Naive thymus-derived CD4-positive, alpha-beta T cell (primary cell): ENCODE measurements at regions of chr19 and their contacts with region 1.

Region 1: GRCh38 chr19:17075035-17075863 is at the starts of genes HAUS8 and MYO9B:
- DNase-seq: peak; percentile 96 to 100 (median 100)
- ATAC-seq: peak; percentile 98
- H3K4me3 ChIP-seq: peak within 1 kb of the TSS; percentile 94
- H3K4me3 Mint-ChIP-seq: peak within 1 kb of the TSS; percentile 96 to 100 (median 98)
- H3K27ac ChIP-seq: peak within 1 kb of the TSS; percentile 88
- H3K27ac Mint-ChIP-seq: peak within 1 kb of the TSS; percentile 86 to 99 (median 97)
- H3K4me1 ChIP-seq: peaks cover 28 to 32% of the 10 kb centered on the region in 2 donors
- H3K4me1 Mint-ChIP-seq: peaks cover 45 to 65% (median 55%) of the 10 kb centered on the region in 7 donors
- H3K27me3 ChIP-seq: no peaks in the 10 kb centered on the region
- H3K27me3 Mint-ChIP-seq: no peaks in the 10 kb centered on the region
- total RNA-seq, gene HAUS8: 16.7 to 31.5 (median 19.3) TPM
- total RNA-seq, gene MYO9B: 154 to 297 (median 205) TPM

Region 2: DNA sequence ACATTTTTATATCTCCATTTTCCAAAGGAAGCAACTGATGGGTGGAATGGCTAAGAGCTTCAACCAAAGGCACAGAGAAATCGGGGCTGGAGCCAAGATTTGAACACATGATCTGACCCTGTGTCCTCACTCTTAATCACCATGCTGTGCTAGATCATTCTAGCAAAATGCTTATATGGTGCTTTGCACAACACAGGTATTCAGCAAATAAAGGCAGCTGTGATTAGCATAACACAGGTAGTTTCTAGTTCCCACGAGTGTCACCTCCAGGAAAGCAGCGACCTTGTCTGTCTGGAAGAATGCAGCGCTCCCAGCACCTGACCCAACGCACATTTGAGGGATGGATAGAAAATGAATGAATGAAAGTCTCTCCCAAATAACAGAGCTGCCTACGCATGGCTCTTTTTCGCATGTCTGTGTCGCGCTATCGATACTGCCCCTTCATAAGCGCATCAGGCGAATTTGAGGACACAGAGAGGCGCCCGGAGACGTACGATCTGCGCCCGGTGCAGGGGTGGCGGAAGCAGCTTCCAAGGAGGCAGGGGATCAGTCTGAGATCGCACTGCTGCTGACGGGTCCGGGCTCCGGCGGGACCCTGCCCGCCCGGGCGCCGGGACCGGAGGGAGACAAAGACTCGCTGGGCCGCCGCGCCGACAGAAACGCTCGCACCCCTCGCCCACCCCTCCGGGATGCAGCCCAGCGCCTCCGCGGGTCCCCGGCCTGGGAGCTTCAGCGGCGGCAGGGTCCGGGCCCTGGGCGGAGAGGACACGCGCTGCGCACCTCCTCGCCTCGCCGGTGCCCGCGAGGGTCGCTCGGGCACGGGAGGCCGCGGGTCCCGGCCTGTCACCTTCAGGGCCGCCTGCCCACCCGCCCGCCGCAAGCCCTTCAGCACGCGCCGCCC is 604.1 kb before region 1 on chr19:
- CTCF ChIA-PET with region 1: no interaction called
- POLR2A ChIA-PET with region 1: no interaction called
- intact Hi-C with region 1: loop called in 1 of 2 experiments (anchors 2 kb)
- DNase-seq: peak in 5 of 9 donors; percentile 14 to 40 (median 18)
- ATAC-seq: peak; percentile 2
- H3K4me3 ChIP-seq: peak overlapping the region; percentile 96
- H3K4me3 Mint-ChIP-seq: peak overlapping the region; percentile 84 to 93 (median 88)
- H3K27ac ChIP-seq: peak overlapping the region; percentile 96
- H3K27ac Mint-ChIP-seq: peak overlapping the region; percentile 18 to 87 (median 79)
- H3K4me1 ChIP-seq: peaks cover 5 to 15% of the 10 kb centered on the region in 2 donors
- H3K4me1 Mint-ChIP-seq: peaks cover 30 to 47% (median 41%) of the 10 kb centered on the region in 7 donors
- H3K27me3 ChIP-seq: no peaks in the 10 kb centered on the region
- H3K27me3 Mint-ChIP-seq: peaks cover 0 to 2% (median 0%) of the 10 kb centered on the region in 5 donors

Region 3: GRCh38 chr19:17037184-17037583 is 38.1 kb before region 1 on chr19:
- CTCF ChIA-PET with region 1: no interaction called
- POLR2A ChIA-PET with region 1: no interaction called
- intact Hi-C with region 1: no loop called
- DNase-seq: no peak
- ATAC-seq: no peak
- H3K4me3 ChIP-seq: no peak overlapping the region
- H3K4me3 Mint-ChIP-seq: no peak overlapping the region
- H3K27ac ChIP-seq: no peak overlapping the region
- H3K27ac Mint-ChIP-seq: no peak overlapping the region
- H3K4me1 ChIP-seq: no peaks in the 10 kb centered on the region
- H3K4me1 Mint-ChIP-seq: peaks cover 0 to 2% (median 0%) of the 10 kb centered on the region in 7 donors
- H3K27me3 ChIP-seq: no peaks in the 10 kb centered on the region
- H3K27me3 Mint-ChIP-seq: peaks cover 0 to 23% (median 10%) of the 10 kb centered on the region in 5 donors

Region 4: DNA sequence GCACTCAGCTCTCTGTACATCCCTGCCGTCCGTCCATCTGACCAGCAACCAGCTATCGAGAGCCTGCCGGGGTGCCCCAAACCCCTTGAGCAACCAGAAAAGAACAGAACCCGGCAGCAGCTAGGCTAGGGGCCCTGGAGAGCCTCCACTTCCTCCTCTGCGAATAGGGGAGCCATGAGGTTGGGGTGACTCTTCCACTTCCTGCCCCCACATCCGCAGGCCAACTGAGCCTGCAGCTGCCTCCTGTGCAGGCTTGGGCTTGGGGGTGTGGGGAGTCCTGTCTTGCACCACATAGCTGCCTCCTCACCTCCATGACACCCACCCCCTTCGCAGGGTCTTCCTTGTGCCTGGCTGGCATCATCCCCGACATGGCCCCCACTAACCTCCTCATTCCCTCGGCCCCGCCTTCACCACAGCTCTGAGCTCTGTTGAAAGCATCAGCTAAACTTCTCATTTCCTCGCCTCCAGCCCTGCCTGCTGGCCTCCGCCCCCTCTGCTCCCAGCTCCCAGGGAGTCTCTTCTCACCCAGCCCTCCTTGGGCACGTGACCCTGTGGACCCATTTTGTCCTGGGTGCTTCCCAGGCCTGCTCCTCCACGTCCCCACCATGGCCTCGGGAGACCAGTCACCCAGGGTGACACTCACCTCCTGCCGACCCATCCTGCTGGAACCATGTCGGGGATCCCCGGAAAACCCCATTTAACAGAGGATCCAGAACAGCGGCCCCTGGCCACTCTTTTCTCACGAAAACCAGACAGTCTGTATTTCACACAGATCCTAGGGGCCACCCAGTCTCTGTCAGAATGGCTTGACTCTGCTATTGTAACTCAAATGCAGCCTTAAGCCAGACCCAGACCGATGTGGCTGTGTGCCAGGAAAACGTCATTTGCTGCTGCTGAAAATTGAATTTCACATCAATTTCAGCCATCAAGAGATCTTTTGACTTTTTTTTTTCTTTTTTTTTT is 50.7 kb after region 1 on chr19:
- CTCF ChIA-PET with region 1: no interaction called
- POLR2A ChIA-PET with region 1: interaction called, 56 read pairs
- intact Hi-C with region 1: loop called (anchors 1 kb)
- DNase-seq: peak; percentile 58 to 87 (median 83)
- ATAC-seq: peak; percentile 91
- H3K4me3 ChIP-seq: peak overlapping the region; percentile 71
- H3K4me3 Mint-ChIP-seq: peak overlapping the region; percentile 81 to 95 (median 86)
- H3K27ac ChIP-seq: peak overlapping the region; percentile 95
- H3K27ac Mint-ChIP-seq: peak overlapping the region; percentile 90 to 100 (median 99)
- H3K4me1 ChIP-seq: peaks cover 33 to 41% of the 10 kb centered on the region in 2 donors
- H3K4me1 Mint-ChIP-seq: peaks cover 18 to 71% (median 50%) of the 10 kb centered on the region in 7 donors
- H3K27me3 ChIP-seq: no peaks in the 10 kb centered on the region
- H3K27me3 Mint-ChIP-seq: no peaks in the 10 kb centered on the region

Region 5: GRCh38 chr19:17226002-17226933 is 151.0 kb after region 1 on chr19 and contains the start of gene OCEL1:
- CTCF ChIA-PET with region 1: no interaction called
- POLR2A ChIA-PET with region 1: no interaction called
- intact Hi-C with region 1: loop called (anchors 1 kb)
- DNase-seq: peak; percentile 91 to 98 (median 97)
- ATAC-seq: peak; percentile 94
- H3K4me3 ChIP-seq: peak within 1 kb of the TSS; percentile 98
- H3K4me3 Mint-ChIP-seq: peak within 1 kb of the TSS; percentile 82 to 98 (median 94)
- H3K27ac ChIP-seq: peak within 1 kb of the TSS; percentile 81
- H3K27ac Mint-ChIP-seq: peak within 1 kb of the TSS; percentile 86 to 99 (median 97)
- H3K4me1 ChIP-seq: peaks cover 0 to 2% of the 10 kb centered on the region in 2 donors
- H3K4me1 Mint-ChIP-seq: peaks cover 3 to 8% (median 5%) of the 10 kb centered on the region in 7 donors
- H3K27me3 ChIP-seq: no peaks in the 10 kb centered on the region
- H3K27me3 Mint-ChIP-seq: no peaks in the 10 kb centered on the region
- total RNA-seq, gene OCEL1: 21.8 to 32.8 (median 29.8) TPM

Region 6: GRCh38 chr19:17305517-17306284 is 230.5 kb after region 1 on chr19 and contains the start of gene MRPL34:
- CTCF ChIA-PET with region 1: interaction called, 3 read pairs
- POLR2A ChIA-PET with region 1: no interaction called
- intact Hi-C with region 1: loop called (anchors 1 kb)
- DNase-seq: peak; percentile 81 to 96 (median 93)
- ATAC-seq: peak; percentile 65
- H3K4me3 ChIP-seq: peak within 1 kb of the TSS; percentile 93
- H3K4me3 Mint-ChIP-seq: peak within 1 kb of the TSS; percentile 82 to 94 (median 90)
- H3K27ac ChIP-seq: peak within 1 kb of the TSS; percentile 81
- H3K27ac Mint-ChIP-seq: peak within 1 kb of the TSS; percentile 82 to 93 (median 90)
- H3K4me1 ChIP-seq: peaks cover 22 to 32% of the 10 kb centered on the region in 2 donors
- H3K4me1 Mint-ChIP-seq: peaks cover 28 to 64% (median 57%) of the 10 kb centered on the region in 7 donors
- H3K27me3 ChIP-seq: no peaks in the 10 kb centered on the region
- H3K27me3 Mint-ChIP-seq: no peaks in the 10 kb centered on the region
- total RNA-seq, gene MRPL34: 37.0 to 76.0 (median 73.3) TPM

Region 7: GRCh38 chr19:17470068-17470841 is 395.0 kb after region 1 on chr19 and contains the start of gene SLC27A1:
- CTCF ChIA-PET with region 1: no interaction called
- POLR2A ChIA-PET with region 1: no interaction called
- intact Hi-C with region 1: loop called in 1 of 2 experiments (anchors 5 kb)
- DNase-seq: peak; percentile 76 to 90 (median 84)
- ATAC-seq: peak; percentile 84
- H3K4me3 ChIP-seq: peak within 1 kb of the TSS; percentile 96
- H3K4me3 Mint-ChIP-seq: peak within 1 kb of the TSS; percentile 92 to 100 (median 96)
- H3K27ac ChIP-seq: peak within 1 kb of the TSS; percentile 77
- H3K27ac Mint-ChIP-seq: peak within 1 kb of the TSS; percentile 74 to 98 (median 93)
- H3K4me1 ChIP-seq: peaks cover 6 to 22% of the 10 kb centered on the region in 2 donors
- H3K4me1 Mint-ChIP-seq: peaks cover 22 to 38% (median 30%) of the 10 kb centered on the region in 7 donors
- H3K27me3 ChIP-seq: no peaks in the 10 kb centered on the region
- H3K27me3 Mint-ChIP-seq: peaks cover 0 to 22% (median 0%) of the 10 kb centered on the region in 5 donors
- total RNA-seq, gene SLC27A1: 3.1 to 15.1 (median 11.0) TPM